ENCODE measurements at regions of chr5 and their contacts with region 1.

Region 1: DNA sequence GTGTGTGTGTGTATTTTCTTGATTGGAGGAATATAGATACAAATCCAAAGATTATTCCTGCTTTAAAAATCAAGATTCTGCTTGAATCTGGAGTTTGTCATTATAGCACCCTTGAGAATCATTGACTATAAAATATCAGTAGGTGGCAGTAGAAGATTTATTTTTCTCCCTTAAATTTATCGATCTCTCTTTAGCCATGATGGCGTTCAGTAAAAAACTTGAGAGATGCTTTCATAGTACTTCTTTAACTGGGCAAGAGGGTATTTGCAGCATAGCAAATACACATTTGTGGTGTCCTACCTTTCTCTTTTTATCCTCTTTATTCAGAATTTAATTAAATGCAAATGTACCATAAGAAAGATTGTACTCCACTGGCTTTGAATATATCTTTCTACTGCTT is 307.7 kb downstream of the ADGRV1 start:
- DNase-seq: no peak
- H3K4me3 Mint-ChIP-seq: no peak overlapping the region
- H3K27ac Mint-ChIP-seq: no peak overlapping the region
- H3K4me1 Mint-ChIP-seq: peaks cover 4% of the 10 kb centered on the region
- H3K27me3 Mint-ChIP-seq: peaks cover 7% of the 10 kb centered on the region

Region 2: DNA sequence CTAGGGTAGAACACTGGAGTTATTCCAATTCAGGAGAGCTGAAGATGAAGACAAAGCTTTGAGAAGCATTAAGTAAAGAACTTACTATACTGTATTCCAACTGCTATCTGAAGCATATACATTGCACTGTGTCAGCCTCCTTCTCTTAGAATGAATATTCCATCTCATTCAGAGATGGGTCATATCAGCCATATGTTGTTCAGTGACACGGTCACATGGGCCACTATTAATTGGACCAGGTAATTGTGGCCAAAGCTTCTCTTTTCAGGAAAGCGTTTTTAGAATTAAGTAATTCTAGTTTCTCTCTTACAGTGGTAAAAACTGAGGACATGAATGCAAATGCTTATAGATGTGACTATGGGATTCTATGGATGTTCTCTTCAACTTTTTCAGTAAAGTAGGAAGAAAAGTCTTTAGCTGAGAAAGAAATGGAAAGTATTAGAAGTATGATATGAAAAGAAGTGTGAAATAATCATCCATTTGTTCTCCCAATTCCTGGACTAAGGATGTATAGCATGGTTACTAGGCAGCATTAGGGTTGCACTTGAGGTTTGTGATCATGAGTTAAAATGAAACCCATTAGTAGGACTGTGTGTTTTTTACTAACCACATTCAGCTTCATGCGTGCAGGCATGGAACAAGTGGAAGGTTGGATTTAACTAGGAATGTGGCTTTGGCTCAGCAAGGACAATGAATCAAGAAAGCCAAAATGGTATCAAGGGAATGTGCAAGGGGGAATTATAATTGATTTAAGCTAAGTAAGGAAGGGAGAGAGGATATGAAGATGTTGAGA is 497.7 kb before region 1 on chr5:
- CTCF ChIA-PET with region 1: no interaction called
- intact Hi-C with region 1: no loop called
- DNase-seq: no peak
- H3K4me3 Mint-ChIP-seq: no peak overlapping the region
- H3K27ac Mint-ChIP-seq: no peak overlapping the region
- H3K4me1 Mint-ChIP-seq: no peaks in the 10 kb centered on the region
- H3K27me3 Mint-ChIP-seq: peaks cover 22% of the 10 kb centered on the region

Region 3: DNA sequence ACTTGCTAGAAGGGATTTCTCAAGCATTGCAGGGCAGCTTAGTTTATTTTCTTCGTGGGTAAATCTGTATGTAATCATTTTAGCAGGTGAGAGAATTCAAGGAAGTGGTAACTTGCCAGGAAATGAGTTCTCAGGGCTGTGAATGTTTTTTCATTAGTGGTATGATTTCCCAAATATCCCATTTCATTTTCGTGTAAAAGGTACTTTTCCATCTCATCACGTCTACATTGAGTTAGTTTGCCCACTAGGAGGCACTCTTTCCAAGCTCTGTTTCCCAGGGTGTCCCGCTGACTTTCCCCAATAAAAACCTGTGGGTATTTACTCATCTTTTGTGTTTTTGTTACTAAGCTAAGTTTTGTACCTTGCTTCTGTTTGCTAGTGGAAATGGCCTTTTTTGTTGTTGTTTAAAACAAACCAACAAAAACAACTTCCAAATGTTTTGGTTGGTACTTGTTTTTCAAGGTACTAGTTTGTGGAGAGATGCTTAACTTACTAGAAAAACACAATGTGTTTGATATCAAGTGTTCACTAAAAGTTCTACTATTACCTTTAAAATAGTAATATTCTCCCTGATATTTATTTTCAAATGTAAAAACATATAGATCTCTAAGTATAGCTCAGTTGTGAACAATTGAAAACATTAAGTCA is 65.8 kb after region 1 on chr5:
- CTCF ChIA-PET with region 1: interaction called, 8 read pairs
- intact Hi-C with region 1: loop called (anchors 2 kb)
- DNase-seq: peak; percentile 65
- H3K4me3 Mint-ChIP-seq: no peak overlapping the region
- H3K27ac Mint-ChIP-seq: no peak overlapping the region
- H3K4me1 Mint-ChIP-seq: peaks cover 5% of the 10 kb centered on the region
- H3K27me3 Mint-ChIP-seq: peaks cover 8% of the 10 kb centered on the region

Region 4: GRCh38 chr5:91219803-91220371 is 353.6 kb after region 1 on chr5:
- CTCF ChIA-PET with region 1: interaction called, 10 read pairs
- intact Hi-C with region 1: loop called (anchors 1 kb)
- DNase-seq: peak; percentile 59
- H3K4me3 Mint-ChIP-seq: no peak overlapping the region
- H3K27ac Mint-ChIP-seq: no peak overlapping the region
- H3K4me1 Mint-ChIP-seq: no peaks in the 10 kb centered on the region
- H3K27me3 Mint-ChIP-seq: no peaks in the 10 kb centered on the region

Region 5: DNA sequence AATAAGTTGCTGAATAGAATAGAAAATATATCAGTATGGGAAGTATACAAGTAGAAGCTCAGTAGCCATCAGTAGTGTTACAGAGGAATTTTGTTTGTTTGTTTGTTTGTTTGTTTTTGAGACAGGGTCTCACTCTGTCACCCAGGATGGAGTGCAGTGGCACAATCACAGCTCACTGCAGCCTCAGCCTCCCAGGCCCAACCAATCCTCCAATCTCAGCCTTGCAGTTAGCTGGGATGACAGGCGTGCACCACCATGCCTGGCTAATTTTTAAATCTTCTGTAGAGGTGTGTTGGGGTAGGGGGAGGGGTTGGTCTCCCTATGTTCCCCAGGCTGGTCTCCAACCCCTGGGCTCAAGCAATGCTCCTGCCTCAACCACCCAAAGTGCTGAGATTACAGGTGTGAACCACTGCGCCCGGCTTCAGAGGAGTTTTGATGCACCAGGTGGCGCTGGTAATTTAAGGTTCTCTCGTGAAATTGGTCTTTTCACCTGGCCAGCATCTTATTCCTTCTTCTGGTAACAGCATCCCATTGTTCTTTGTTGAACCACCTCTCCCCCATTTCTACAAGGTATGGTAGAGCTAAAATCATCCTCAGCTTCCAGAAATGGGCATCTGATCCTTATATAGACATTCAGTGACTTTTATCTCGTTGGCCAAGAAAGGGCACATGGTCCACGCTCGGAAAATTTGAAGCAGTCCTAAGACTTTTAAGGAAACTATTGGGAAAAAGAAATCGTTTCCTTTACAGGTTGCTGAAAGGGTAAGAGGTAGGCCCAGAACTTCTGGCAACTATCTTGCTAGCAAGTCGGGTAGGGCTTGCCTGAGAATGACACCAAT is 359.7 kb after region 1 on chr5:
- CTCF ChIA-PET with region 1: interaction called, 3 read pairs
- intact Hi-C with region 1: loop called (anchors 1 kb)
- DNase-seq: peak; percentile 80
- H3K4me3 Mint-ChIP-seq: no peak overlapping the region
- H3K27ac Mint-ChIP-seq: no peak overlapping the region
- H3K4me1 Mint-ChIP-seq: peaks cover 4% of the 10 kb centered on the region
- H3K27me3 Mint-ChIP-seq: no peaks in the 10 kb centered on the region